PC-9 (cell line): ENCODE measurements at regions of chr16 and their contacts with region 1.

Region 1: GRCh38 chr16:4616047-4616811 is 1.5 kb upstream of the UBALD1 start:
- DNase-seq: peak; percentile 98 to 99
- H3K4me3 ChIP-seq: peak overlapping the region; percentile 88
- H3K27ac ChIP-seq: peak overlapping the region; percentile 89
- H3K4me1 ChIP-seq: peaks cover 42% of the 10 kb centered on the region
- H3K27me3 ChIP-seq: no peaks in the 10 kb centered on the region
- CTCF ChIP-seq: no peak; the same call in 1 of the 2 replicates

Region 2: DNA sequence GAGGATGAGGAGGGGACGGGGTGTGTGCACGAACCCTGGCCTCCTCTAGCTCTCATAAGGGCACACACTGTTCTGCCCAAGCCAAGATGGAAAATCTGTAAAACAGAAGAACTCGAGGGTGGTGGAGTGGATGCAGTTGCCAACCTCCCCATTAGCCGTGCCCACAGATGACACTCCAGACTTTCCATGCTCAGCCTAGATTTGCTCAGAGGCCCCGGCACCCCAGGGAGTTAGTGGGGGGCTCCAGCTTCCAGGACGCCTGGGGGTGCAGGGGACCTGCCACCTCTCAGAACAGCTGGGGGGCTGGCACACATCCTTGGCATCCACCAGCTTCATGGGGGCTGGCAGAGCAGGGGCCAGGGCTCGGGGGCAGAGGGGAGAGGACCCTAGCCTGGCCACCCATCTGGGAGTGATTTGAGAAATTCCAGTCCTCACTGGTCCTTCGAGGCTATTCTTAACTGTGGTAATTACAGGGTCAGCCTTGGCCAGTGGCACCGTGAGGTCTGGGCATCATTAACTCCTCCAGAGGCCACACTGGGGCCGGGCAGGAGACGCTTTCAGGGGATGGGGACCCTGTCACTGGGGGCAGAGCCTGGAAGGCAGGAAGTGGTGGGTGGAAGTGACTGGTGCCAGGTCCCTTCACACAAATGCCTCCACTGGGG is 230.3 kb before region 1 on chr16:
- CTCF ChIA-PET with region 1: no interaction called
- POLR2A ChIA-PET with region 1: interaction called, 11 read pairs
- intact Hi-C with region 1: no loop called
- DNase-seq: no peak
- H3K4me3 ChIP-seq: no peak overlapping the region
- H3K27ac ChIP-seq: no peak overlapping the region
- H3K4me1 ChIP-seq: peaks cover 8% of the 10 kb centered on the region; the same call in 1 of the 2 replicates
- H3K27me3 ChIP-seq: no peaks in the 10 kb centered on the region
- CTCF ChIP-seq: no peak

Region 3: GRCh38 chr16:4511441-4512082 is 104.7 kb before region 1 on chr16:
- CTCF ChIA-PET with region 1: interaction called, 3 read pairs
- POLR2A ChIA-PET with region 1: no interaction called
- intact Hi-C with region 1: loop called (anchors 2 kb)
- DNase-seq: peak; percentile 64 to 74
- H3K4me3 ChIP-seq: no peak overlapping the region
- H3K27ac ChIP-seq: no peak overlapping the region
- H3K4me1 ChIP-seq: no peaks in the 10 kb centered on the region
- H3K27me3 ChIP-seq: no peaks in the 10 kb centered on the region
- CTCF ChIP-seq: peak; percentile 70

Region 4: GRCh38 chr16:4550591-4550990 is 65.6 kb before region 1 on chr16:
- CTCF ChIA-PET with region 1: interaction called, 15 read pairs
- POLR2A ChIA-PET with region 1: no interaction called
- intact Hi-C with region 1: no loop called
- DNase-seq: no peak
- H3K4me3 ChIP-seq: no peak overlapping the region
- H3K27ac ChIP-seq: no peak overlapping the region
- H3K4me1 ChIP-seq: no peaks in the 10 kb centered on the region
- H3K27me3 ChIP-seq: peaks cover 13% of the 10 kb centered on the region; the same call in 1 of the 2 replicates
- CTCF ChIP-seq: no peak

Region 5: DNA sequence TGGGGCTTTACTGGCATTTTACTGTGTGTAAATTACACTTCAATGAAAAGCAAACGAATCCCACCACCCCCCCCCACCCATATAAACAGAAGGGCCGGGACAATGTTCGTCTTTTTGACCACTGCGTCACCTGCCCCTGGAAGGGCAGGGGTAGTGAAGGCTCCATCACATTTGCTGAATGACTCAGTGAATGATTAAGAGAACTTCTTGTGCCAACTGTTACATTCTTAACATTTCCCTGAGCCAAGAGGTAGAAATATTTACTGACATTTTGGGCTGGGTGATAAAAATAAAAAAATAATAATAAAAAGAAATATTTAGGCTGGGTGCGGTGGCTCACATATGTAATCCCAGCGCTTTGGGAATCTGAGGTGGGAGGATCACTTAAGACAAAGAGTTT is 36.0 kb before region 1 on chr16:
- CTCF ChIA-PET with region 1: no interaction called
- POLR2A ChIA-PET with region 1: no interaction called
- intact Hi-C with region 1: no loop called
- DNase-seq: peak in 1 of 2 experiments; percentile 60
- H3K4me3 ChIP-seq: no peak overlapping the region
- H3K27ac ChIP-seq: no peak overlapping the region
- H3K4me1 ChIP-seq: no peaks in the 10 kb centered on the region
- H3K27me3 ChIP-seq: no peaks in the 10 kb centered on the region
- CTCF ChIP-seq: no peak

Region 6: GRCh38 chr16:4802659-4803287 is 186.5 kb after region 1 on chr16:
- CTCF ChIA-PET with region 1: no interaction called
- POLR2A ChIA-PET with region 1: no interaction called
- intact Hi-C with region 1: no loop called
- DNase-seq: peak; percentile 82 to 96
- H3K4me3 ChIP-seq: peak overlapping the region; percentile 81
- H3K27ac ChIP-seq: peak overlapping the region; percentile 55
- H3K4me1 ChIP-seq: peaks cover 14% of the 10 kb centered on the region
- H3K27me3 ChIP-seq: no peaks in the 10 kb centered on the region
- CTCF ChIP-seq: 0 out of 2 replicates have a peak, but pooled peaks have one; percentile 25

Region 7: GRCh38 chr16:4944333-4945281 is 328.4 kb after region 1 on chr16:
- CTCF ChIA-PET with region 1: no interaction called
- POLR2A ChIA-PET with region 1: interaction called, 3 read pairs
- intact Hi-C with region 1: loop called (anchors 2 kb)
- DNase-seq: peak; percentile 97 to 100
- H3K4me3 ChIP-seq: 0 out of 2 replicates have a peak overlapping the region, but pooled peaks have one; percentile 23
- H3K27ac ChIP-seq: peak overlapping the region; percentile 96
- H3K4me1 ChIP-seq: peaks cover 78% of the 10 kb centered on the region
- H3K27me3 ChIP-seq: no peaks in the 10 kb centered on the region
- CTCF ChIP-seq: no peak